HepG2 (cell line): ENCODE measurements at regions of chrX and their contacts with region 1.

Region 1: GRCh38 chrX:130916636-130917422 is 13.8 kb upstream of the ENOX2 start:
- DNase-seq: peak; percentile 35
- ATAC-seq: peak; percentile 57; the same call in 1 of the 3 replicates
- H3K4me3 ChIP-seq: no peak overlapping the region
- H3K27ac ChIP-seq: no peak overlapping the region
- H3K4me1 ChIP-seq: no peaks in the 10 kb centered on the region
- H3K27me3 ChIP-seq: no peaks in the 10 kb centered on the region
- CTCF ChIP-seq: peak; percentile 78
- EP300 ChIP-seq: no peak
- POLR2A ChIP-seq: no peak
- RAD21 ChIP-seq: peak; percentile 68

Region 2: DNA sequence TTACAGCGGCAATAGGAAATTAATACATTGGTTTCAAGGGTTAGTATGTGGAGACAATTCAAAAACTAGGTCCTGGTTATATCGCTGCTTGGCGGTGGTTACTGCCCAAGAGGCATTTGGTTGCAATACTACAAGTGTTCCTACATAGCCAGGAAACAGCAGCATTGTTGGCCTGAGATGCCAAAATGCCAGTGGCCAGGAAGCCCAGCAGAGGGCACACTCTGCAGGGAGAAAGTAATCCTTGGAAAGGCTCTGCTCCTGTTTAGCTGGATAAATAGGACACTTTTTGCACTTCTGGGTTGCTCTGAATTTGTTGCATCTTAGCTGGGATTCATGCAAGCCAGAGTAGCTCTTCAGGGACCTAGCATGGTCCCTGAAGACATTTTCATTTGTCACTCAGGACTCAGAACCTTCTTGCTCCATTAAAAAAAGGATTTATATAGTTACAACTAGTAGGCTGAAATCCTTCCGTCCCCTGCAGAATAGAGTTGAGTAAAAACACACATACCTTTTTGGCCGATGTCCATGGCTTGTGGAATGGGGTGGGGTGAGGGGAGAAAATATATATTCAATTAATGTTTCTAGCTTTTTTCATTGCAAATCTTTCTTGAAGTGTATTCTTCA is 523.3 kb before region 1 on chrX:
- CTCF ChIA-PET with region 1: interaction called, 6 read pairs
- POLR2A ChIA-PET with region 1: no interaction called
- in situ Hi-C with region 1: loop called (anchors 10 kb)
- intact Hi-C with region 1: loop called (anchors 1 kb)
- DNase-seq: peak; percentile 12
- ATAC-seq: peak; percentile 78
- H3K4me3 ChIP-seq: no peak overlapping the region
- H3K27ac ChIP-seq: no peak overlapping the region
- H3K4me1 ChIP-seq: no peaks in the 10 kb centered on the region
- H3K27me3 ChIP-seq: peaks cover 0 to 7% of the 10 kb centered on the region in 2 experiments; a peak in 1 of 5 replicates
- CTCF ChIP-seq: peak; percentile 75
- EP300 ChIP-seq: no peak
- POLR2A ChIP-seq: no peak
- RAD21 ChIP-seq: 0 out of 2 replicates have a peak, but pooled peaks have one; percentile 12

Region 3: DNA sequence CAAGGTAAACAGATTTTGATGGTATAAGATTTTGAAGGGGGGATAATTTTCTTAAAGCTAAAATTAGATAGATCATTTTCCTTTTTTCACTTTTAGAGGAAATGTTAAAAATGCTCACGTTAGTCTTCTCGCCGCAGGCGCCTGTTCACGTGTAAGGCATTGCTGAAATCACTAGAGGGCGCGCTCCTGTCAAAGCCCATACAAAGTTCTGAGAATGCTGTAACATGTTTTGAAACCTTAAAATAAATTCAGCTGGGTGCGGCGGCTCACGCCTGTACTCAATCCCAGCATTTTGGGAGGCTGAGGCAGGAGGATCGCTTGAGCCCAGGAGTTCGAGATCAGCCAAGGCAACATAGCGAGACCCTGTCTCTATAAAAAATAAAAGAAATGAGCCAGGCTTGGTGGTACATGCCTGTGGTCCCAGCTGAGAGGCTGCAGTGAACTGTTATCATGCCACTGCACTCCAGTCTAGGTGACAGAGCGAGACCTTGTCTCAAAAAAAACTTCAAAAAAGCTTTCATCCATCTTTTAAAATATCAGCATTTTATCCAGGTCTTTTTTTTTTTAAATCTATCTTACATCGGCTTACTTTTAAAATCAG is 377.0 kb before region 1 on chrX:
- CTCF ChIA-PET with region 1: interaction called, 14 read pairs
- POLR2A ChIA-PET with region 1: no interaction called
- in situ Hi-C with region 1: loop called (anchors 10 kb)
- intact Hi-C with region 1: loop called (anchors 1 kb)
- DNase-seq: peak; percentile 15
- ATAC-seq: peak; percentile 51
- H3K4me3 ChIP-seq: no peak overlapping the region
- H3K27ac ChIP-seq: no peak overlapping the region
- H3K4me1 ChIP-seq: no peaks in the 10 kb centered on the region
- H3K27me3 ChIP-seq: no peaks in the 10 kb centered on the region
- CTCF ChIP-seq: peak; percentile 65
- EP300 ChIP-seq: no peak
- POLR2A ChIP-seq: no peak
- RAD21 ChIP-seq: 0 out of 2 replicates have a peak, but pooled peaks have one; percentile 29

Region 4: GRCh38 chrX:130575831-130576389 is 340.9 kb before region 1 on chrX:
- CTCF ChIA-PET with region 1: interaction called, 6 read pairs
- POLR2A ChIA-PET with region 1: no interaction called
- in situ Hi-C with region 1: no loop called
- intact Hi-C with region 1: loop called (anchors 10 kb)
- DNase-seq: peak; percentile 14
- ATAC-seq: peak; percentile 52; the same call in 1 of the 3 replicates
- H3K4me3 ChIP-seq: no peak overlapping the region
- H3K27ac ChIP-seq: no peak overlapping the region
- H3K4me1 ChIP-seq: no peaks in the 10 kb centered on the region
- H3K27me3 ChIP-seq: no peaks in the 10 kb centered on the region
- CTCF ChIP-seq: peak; percentile 69
- EP300 ChIP-seq: no peak
- POLR2A ChIP-seq: no peak
- RAD21 ChIP-seq: peak; percentile 43; the same call in 1 of the 2 replicates